Dendritic cell treated with granulocyte-macrophage colony-stimulating factor and Interleukin-4, amounts not matched to agents 40 ng/mL and 50 ng/mL, for 4 days (primary cell): ENCODE measurements at regions of chr4 and their contacts with region 1.

Region 1: DNA sequence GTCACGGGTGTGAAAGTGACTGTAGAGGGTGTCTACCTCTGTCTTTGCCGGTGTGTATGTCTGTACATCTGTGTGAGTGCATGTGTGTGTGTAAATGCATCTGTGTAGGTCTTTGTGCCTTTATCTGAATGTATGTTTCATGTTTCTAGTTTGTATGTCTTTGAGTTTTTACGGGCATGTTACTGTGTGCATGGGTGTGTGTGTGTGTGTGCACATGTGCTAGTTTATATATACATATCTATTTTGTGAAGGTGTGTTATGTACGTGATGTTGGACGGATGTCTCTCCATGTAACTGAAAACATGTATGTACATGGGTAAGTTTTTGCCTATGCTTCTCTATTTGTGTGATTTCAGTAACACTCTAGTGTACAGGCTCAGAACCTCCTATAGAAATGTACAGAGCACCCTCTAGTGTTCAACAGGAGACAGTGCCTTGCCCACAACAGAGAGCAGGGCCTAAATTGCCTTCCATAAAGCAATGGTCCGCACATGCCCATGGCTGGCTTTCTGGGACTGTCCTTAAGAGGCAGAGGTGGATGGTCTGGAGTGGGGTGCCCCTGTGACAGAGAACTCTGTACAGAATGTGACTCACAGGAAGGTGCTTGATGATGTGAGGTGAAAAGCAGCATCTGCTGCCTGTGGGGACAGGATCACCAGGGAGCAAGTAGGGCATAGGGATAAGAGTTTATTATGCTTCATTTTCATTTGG is 343.5 kb downstream of the RAPGEF2 start:
- H3K4me3 Mint-ChIP-seq: no peak overlapping the region
- H3K27ac Mint-ChIP-seq: no peak overlapping the region
- H3K4me1 Mint-ChIP-seq: no peaks in the 10 kb centered on the region
- H3K27me3 Mint-ChIP-seq: no peaks in the 10 kb centered on the region

Region 2: GRCh38 chr4:159326480-159326879 is 119.9 kb before region 1 on chr4:
- intact Hi-C with region 1: loop called (anchors 5 kb)
- H3K4me3 Mint-ChIP-seq: no peak overlapping the region
- H3K27ac Mint-ChIP-seq: no peak overlapping the region
- H3K4me1 Mint-ChIP-seq: peaks cover 10% of the 10 kb centered on the region
- H3K27me3 Mint-ChIP-seq: no peaks in the 10 kb centered on the region